Adrenal gland (tissue), 19 donors: ENCODE measurements at regions of chr14 and their contacts with region 1.

Region 1: DNA sequence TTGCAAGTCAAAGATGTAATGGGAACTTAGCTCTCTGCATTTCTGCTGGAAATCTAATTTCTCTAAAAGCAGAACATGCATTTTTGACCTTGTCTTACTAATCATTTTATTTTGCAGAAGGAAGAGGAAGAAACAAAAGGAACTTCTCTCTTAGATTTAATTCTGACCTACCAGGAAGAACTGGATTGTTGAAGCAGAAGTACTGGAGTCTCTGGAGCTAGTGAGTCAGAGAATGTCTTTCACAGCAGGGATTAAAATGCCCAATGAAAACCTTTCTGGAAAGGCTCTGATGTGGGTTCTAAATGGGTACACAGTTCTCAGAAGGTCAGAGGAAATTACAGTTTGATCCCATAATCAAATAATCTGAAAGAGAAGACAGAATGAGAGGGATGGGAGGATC is 70.8 kb upstream of the GNG2 start:
- DNase-seq: no peak
- H3K4me3 ChIP-seq: no peak overlapping the region
- H3K27ac ChIP-seq: peak overlapping the region in 1 of 5 donors; percentile 32
- H3K4me1 ChIP-seq: no peaks in the 10 kb centered on the region
- H3K27me3 ChIP-seq: no peaks in the 10 kb centered on the region
- CTCF ChIP-seq: no peak
- POLR2A ChIP-seq: no peak

Region 2: DNA sequence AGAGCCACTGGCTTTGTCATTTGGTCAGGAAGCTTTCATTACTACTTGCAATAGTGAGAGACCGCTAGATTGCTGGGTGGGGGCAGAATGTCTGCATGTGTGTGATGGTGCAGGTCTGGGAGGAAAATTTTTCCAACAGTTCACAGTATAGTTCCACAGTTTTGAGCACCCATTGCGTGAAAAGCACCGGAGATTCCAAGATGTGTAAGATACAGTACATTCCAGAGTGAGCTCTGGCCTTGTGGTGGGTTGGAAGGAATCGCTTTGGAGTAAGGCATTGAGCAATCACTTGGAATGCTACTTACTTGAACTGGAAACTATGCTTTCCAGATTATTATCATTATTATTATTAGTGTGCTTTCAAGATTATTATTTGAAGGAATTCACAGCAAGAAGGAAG is 185.5 kb before region 1 on chr14:
- intact Hi-C with region 1: no loop called
- DNase-seq: no peak
- H3K4me3 ChIP-seq: no peak overlapping the region
- H3K27ac ChIP-seq: no peak overlapping the region
- H3K4me1 ChIP-seq: peaks cover 15 to 27% of the 10 kb centered on the region in 2 donors
- H3K27me3 ChIP-seq: no peaks in the 10 kb centered on the region
- CTCF ChIP-seq: no peak
- POLR2A ChIP-seq: no peak

Region 3: DNA sequence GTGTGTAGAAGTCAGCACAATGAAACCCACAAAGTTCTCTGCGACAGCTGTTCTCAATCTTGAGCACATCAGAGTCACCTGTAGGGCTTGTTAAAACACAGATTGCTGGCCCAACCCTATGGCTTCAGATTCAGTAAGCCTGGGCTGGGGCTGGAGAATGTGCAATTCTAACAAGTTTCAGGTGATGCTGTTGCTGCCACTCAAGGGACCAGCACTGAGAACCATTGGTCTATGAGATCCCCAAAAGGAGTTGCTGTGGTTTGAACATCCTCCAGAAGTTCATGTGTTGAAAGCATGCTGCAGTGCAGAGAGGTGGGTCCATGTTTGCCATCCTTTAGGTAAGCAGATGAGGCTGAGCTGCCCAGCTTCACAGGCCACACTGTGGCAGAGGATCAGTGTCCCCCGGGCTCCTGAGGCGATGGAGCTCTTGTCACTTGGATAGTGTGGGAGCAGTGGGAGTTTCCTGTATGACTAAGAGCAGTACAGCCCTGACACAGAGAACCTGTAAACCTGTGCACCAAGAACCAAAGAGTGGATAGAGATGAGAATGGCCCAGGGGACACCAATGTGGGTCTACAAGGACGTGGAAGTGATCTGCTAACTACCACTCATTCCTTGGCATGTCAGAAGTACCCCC is 191.7 kb after region 1 on chr14:
- intact Hi-C with region 1: loop called in 1 of 2 experiments (anchors 5 kb)
- DNase-seq: no peak
- H3K4me3 ChIP-seq: no peak overlapping the region
- H3K27ac ChIP-seq: no peak overlapping the region
- H3K4me1 ChIP-seq: peaks cover 0 to 6% of the 10 kb centered on the region in 2 donors
- H3K27me3 ChIP-seq: no peaks in the 10 kb centered on the region
- CTCF ChIP-seq: no peak
- POLR2A ChIP-seq: no peak